Caco-2 (cell line): ENCODE measurements at regions of chr11 and their contacts with region 1.

Region 1: DNA sequence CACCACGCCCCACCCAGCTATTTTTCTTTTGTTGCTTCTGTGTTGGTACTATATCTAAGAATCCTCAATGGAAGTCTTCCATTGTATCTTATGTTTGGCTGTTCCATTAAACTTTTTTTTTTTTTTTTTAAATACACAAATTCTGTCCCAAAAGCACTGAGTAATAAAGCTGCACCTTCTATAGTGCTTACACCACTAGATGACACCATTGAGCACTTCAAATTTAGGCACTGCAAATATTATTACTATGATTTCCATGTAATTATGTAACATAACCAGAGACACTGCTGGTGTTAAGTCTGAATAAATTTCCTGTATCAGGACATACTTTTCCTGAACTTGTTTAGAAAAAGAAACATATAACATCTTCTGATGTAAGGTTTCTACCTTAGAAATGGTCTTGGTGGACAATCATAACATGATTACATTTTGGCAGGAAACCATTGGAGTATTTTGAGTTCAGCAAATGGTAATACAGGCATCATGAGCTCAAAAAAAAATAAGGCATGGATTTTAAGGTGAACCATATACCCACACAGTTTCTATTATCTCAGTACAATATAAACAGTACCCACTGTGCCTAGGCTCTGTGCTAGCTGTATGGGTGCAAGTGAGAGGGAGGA is 110.5 kb downstream of the ATG16L2 start:
- DNase-seq: peak in 1 of 2 experiments; percentile 40
- H3K4me3 ChIP-seq: no peak overlapping the region
- H3K4me3 Mint-ChIP-seq: no peak overlapping the region
- H3K27ac Mint-ChIP-seq: no peak overlapping the region
- H3K4me1 ChIP-seq: no peaks in the 10 kb centered on the region
- H3K4me1 Mint-ChIP-seq: no peaks in the 10 kb centered on the region
- H3K27me3 ChIP-seq: no peaks in the 10 kb centered on the region
- H3K27me3 Mint-ChIP-seq: no peaks in the 10 kb centered on the region
- CTCF ChIP-seq: peak; percentile 63 to 73

Region 2: DNA sequence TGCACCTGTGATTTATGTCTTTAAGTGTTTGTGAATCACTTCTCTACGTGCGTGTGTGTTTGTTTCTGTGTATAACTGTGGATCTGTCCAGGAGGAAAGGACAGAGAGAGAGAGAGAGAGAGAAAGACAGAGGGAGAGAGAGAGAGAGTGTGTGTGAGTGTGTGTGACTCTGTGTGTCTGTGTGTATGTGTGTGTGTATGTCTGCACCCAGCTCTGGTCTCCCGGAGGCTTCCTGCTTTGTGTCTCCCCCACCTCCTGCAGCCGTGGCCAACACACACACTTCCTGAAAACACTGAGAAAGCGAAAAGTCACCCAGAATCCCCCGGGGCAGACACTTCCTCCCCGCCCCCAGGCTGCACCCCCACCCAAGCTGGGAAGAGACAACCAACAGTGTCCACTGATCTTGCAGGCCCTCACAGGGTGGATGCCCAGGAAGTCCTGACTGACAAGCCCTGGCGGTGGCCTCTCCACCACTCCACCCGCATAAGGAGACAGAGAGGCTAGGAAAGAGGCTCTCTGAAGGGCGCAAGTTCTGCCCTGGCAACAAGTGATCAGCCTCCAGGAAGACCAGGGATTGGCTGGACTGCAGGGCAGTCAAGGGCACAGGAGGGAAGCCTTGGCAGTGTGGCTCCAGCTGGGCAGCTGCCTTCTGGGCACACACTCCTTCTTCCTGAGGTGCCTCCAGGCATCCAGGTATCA is 202.5 kb before region 1 on chr11:
- CTCF ChIA-PET with region 1: no interaction called
- POLR2A ChIA-PET with region 1: no interaction called
- intact Hi-C with region 1: no loop called
- DNase-seq: peak in 1 of 2 experiments; percentile 57
- H3K4me3 ChIP-seq: no peak overlapping the region
- H3K4me3 Mint-ChIP-seq: no peak overlapping the region
- H3K27ac Mint-ChIP-seq: peak overlapping the region; percentile 41
- H3K4me1 ChIP-seq: peaks cover 4% of the 10 kb centered on the region; the same call in 1 of the 2 replicates
- H3K4me1 Mint-ChIP-seq: no peaks in the 10 kb centered on the region
- H3K27me3 ChIP-seq: no peaks in the 10 kb centered on the region
- H3K27me3 Mint-ChIP-seq: no peaks in the 10 kb centered on the region
- CTCF ChIP-seq: no peak

Region 3: DNA sequence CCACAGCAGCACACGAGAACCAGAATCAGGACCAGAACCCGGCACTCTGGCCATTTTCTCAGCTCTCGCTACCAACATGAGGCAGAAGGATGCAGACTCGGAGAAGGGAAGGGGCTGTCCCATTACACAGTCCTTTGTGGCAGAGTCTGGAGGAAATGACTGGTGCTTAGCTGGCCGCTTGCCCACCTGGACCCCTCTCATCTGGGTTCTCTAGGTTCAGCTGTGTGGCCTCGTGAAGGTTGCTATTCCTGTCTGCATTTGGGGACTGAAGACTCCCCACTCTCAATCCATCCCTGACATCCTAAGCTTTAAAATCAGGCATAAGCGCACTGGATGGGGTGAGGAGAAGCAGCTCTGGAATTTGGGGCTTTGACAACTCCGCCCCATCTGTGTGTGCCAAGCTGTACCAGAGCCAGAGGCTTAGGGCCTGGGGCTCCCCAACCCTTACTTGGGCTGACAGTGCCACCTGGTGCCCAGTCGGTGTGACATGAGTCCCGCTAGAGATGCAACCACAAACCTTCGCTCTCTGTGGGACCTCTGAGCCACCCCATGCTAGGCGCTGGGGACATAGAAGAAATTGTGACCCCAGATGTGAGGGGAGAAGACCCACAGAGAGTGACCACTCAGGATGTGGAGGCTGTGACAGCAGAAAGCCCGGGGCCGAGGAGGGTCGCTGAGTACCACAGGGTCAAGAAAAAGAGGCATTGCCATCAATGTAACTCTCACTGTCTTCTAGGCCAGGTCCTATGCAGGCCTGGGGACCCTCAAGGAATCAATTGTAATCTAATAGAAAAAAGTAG is 253.3 kb after region 1 on chr11:
- CTCF ChIA-PET with region 1: interaction called, 17 read pairs
- POLR2A ChIA-PET with region 1: no interaction called
- intact Hi-C with region 1: loop called (anchors 1 kb)
- DNase-seq: peak; percentile 85 to 88
- H3K4me3 ChIP-seq: no peak overlapping the region
- H3K4me3 Mint-ChIP-seq: no peak overlapping the region
- H3K27ac Mint-ChIP-seq: no peak overlapping the region
- H3K4me1 ChIP-seq: peaks cover 30% of the 10 kb centered on the region
- H3K4me1 Mint-ChIP-seq: peaks cover 19% of the 10 kb centered on the region
- H3K27me3 ChIP-seq: no peaks in the 10 kb centered on the region
- H3K27me3 Mint-ChIP-seq: no peaks in the 10 kb centered on the region
- CTCF ChIP-seq: peak; percentile 93 to 96